Mammary epithelial cell (primary cell): ENCODE measurements at regions of chr12 and their contacts with region 1.

Region 1: GRCh38 chr12:124767066-124767821 is 96.4 kb downstream of the SCARB1 start:
- DNase-seq: peak; percentile 43
- H3K4me3 ChIP-seq: no peak overlapping the region
- H3K27ac ChIP-seq: no peak overlapping the region
- H3K4me1 ChIP-seq: peaks cover 11% of the 10 kb centered on the region
- H3K27me3 ChIP-seq: no peaks in the 10 kb centered on the region
- CTCF ChIP-seq: peak; percentile 78 to 98

Region 2: GRCh38 chr12:124044809-124045321 is 722.4 kb before region 1 on chr12:
- CTCF ChIA-PET with region 1: interaction called, 3 read pairs
- dilution Hi-C with region 1: no loop called
- in situ Hi-C with region 1: loop called (anchors 10 kb)
- intact Hi-C with region 1: no loop called
- DNase-seq: peak; percentile 81
- H3K4me3 ChIP-seq: peak overlapping the region in 1 of 3 experiments; percentile 30
- H3K27ac ChIP-seq: no peak overlapping the region
- H3K4me1 ChIP-seq: peaks cover 24% of the 10 kb centered on the region
- H3K27me3 ChIP-seq: no peaks in the 10 kb centered on the region
- CTCF ChIP-seq: no peak

Region 3: GRCh38 chr12:124347716-124348357 is 419.4 kb before region 1 on chr12:
- CTCF ChIA-PET with region 1: no interaction called
- dilution Hi-C with region 1: no loop called
- in situ Hi-C with region 1: no loop called
- intact Hi-C with region 1: loop called (anchors 5 kb)
- DNase-seq: no peak
- H3K4me3 ChIP-seq: no peak overlapping the region
- H3K27ac ChIP-seq: no peak overlapping the region
- H3K4me1 ChIP-seq: no peaks in the 10 kb centered on the region
- H3K27me3 ChIP-seq: no peaks in the 10 kb centered on the region
- CTCF ChIP-seq: peak in 1 of 2 donors; percentile 50

Region 4: GRCh38 chr12:124567661-124568373 is 199.4 kb before region 1 on chr12:
- CTCF ChIA-PET with region 1: no interaction called
- dilution Hi-C with region 1: no loop called
- in situ Hi-C with region 1: loop called in 1 of 2 experiments (anchors 5 kb)
- intact Hi-C with region 1: loop called (anchors 1 kb)
- DNase-seq: peak; percentile 79
- H3K4me3 ChIP-seq: peak overlapping the region; percentile 8 to 97 (median 39)
- H3K27ac ChIP-seq: peak overlapping the region; percentile 31
- H3K4me1 ChIP-seq: peaks cover 27% of the 10 kb centered on the region
- H3K27me3 ChIP-seq: no peaks in the 10 kb centered on the region
- CTCF ChIP-seq: no peak

Region 5: DNA sequence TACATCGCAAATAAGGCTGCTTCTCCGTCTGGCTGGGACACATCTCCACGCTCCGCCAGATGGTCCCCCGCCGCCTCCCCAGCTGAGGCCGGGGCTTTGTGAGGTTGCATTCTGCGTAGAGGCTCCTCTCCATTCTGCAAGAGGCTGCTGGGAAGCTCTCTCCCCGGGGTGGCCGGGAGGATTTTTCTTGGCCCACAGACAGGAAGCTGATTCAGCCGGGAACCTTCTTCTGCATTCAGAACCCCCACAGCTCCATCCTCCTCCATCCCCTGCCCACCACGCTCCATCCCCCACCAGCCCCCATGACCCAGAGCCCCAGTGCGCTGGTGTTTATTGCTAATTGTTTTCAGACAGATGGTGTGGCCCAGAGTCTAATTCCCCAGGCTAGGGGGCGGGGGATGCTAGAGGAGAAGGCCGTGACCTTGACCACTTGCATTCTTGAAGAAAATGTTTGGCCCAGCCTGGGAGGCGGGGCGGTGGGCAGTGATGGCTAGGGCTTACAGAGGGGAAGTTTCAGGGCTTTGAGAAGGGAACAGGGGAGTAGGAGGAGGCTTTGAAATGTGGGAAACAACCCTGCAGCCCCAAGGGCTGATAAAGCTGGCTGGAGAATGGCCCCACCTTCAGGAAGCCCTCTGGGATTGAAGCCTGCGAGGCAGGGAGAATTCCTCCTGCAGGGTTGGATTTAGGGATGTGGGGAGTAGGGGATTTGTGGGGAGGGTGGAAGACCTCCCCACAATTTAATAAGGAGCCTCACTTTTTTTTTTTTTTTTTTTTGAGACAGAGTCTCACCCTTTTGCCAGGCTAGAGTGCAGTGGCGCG is 111.3 kb before region 1 on chr12:
- CTCF ChIA-PET with region 1: no interaction called
- dilution Hi-C with region 1: no loop called
- in situ Hi-C with region 1: no loop called
- intact Hi-C with region 1: no loop called
- DNase-seq: no peak
- H3K4me3 ChIP-seq: no peak overlapping the region
- H3K27ac ChIP-seq: no peak overlapping the region
- H3K4me1 ChIP-seq: peaks cover 10% of the 10 kb centered on the region
- H3K27me3 ChIP-seq: no peaks in the 10 kb centered on the region
- CTCF ChIP-seq: no peak

Region 6: DNA sequence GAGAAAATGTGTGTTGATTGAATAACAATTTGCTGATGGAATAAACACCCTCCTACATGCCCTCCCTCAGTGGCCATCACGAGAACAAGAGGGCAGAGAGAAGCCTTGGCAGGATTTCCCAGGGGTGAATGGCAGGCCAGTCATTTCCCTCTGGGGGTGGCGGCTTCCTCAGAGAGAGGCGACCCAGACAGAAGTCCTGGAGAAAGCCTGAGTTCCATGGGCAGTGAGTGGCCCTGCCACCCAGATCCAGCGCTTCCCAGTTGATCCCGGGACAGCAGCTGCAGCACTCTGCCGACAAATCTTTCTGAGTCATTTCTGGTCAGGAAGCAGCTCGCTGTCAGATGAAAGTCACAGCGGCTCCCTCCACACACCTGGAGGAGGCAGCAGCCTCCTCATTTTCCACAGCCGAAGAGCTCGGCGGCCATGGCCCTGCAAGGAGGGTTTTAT is 26.5 kb before region 1 on chr12:
- CTCF ChIA-PET with region 1: no interaction called
- dilution Hi-C with region 1: no loop called
- in situ Hi-C with region 1: no loop called
- intact Hi-C with region 1: loop called (anchors 1 kb)
- DNase-seq: peak; percentile 83
- H3K4me3 ChIP-seq: no peak overlapping the region
- H3K27ac ChIP-seq: no peak overlapping the region
- H3K4me1 ChIP-seq: peaks cover 15% of the 10 kb centered on the region
- H3K27me3 ChIP-seq: no peaks in the 10 kb centered on the region
- CTCF ChIP-seq: peak; percentile 28 to 58